Posterior vena cava (tissue), 2 donors: ENCODE measurements at regions of chr18 and their contacts with region 1.

Region 1: GRCh38 chr18:13216092-13216582 is 2.4 kb upstream of the LDLRAD4 start:
- DNase-seq: peak; percentile 90

Region 2: GRCh38 chr18:13319629-13320028 is 103.5 kb after region 1 on chr18:
- intact Hi-C with region 1: loop called in 1 of 2 experiments (anchors 2 kb)
- DNase-seq: no peak

Region 3: DNA sequence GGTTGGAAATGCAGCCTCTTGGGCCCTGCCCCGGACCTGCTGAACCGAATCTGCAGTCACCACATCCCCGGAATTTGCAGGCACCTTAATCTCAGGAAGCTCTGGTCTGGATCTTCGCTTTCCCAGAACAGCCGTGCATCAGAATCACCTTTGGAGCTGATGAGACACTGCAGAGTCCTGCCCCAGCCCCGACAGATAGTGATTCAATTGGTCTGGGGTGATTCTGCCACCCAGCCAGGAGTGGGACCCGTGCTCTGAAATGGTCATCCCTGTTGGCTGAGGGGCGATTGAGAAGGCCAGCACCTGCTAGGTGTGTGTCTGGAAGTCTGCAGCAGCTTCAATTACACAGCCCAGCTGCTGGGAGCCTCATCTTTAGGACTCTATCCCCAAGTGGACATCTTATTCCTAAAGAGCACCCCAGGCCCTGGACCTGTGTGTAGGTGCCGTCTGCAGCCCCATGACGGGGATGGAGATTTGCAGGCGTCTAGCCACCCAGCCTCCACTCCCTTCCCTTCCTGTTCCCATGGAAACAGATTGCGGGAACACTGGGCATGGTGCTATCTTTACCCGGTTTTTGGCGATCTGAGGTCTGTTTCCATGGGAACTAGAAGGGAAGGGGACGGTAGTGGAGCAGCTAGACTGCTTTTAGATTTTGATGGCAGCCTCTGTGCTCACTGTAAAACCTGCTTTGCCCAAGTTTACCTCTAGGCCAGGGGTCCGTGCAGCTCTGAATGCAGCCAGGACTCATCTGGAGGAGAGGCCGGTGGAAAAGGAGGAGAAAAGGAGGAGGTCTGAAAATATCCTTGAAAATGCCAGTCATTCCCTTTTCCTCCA is 158.5 kb after region 1 on chr18:
- intact Hi-C with region 1: loop called in 1 of 2 experiments (anchors 5 kb)
- DNase-seq: no peak

Region 4: GRCh38 chr18:13530879-13531387 is 314.8 kb after region 1 on chr18:
- intact Hi-C with region 1: loop called (anchors 2 to 5 kb)
- DNase-seq: peak; percentile 91

Region 5: GRCh38 chr18:13629841-13630715 is 413.9 kb after region 1 on chr18:
- intact Hi-C with region 1: loop called (anchors 5 to 10 kb)
- DNase-seq: no peak

Region 6: GRCh38 chr18:13726232-13726971 is 510.3 kb after region 1 on chr18 and contains the starts of genes FAM210A and RNMT:
- intact Hi-C with region 1: loop called in 1 of 2 experiments (anchors 5 kb)
- DNase-seq: peak; percentile 99
- total RNA-seq, gene FAM210A: 12.9 to 18.4 TPM
- total RNA-seq, gene RNMT: 28.8 to 33.3 TPM